ENCODE measurements at regions of chr9 and their contacts with region 1.

Region 1: GRCh38 chr9:129884220-129885017 is 49.2 kb downstream of the USP20 start:
- DNase-seq: peak; percentile 88 to 94
- H3K4me3 ChIP-seq: peak overlapping the region; percentile 40 to 46
- H3K27ac ChIP-seq: peak overlapping the region; percentile 73 to 85
- H3K4me1 ChIP-seq: peaks cover 0 to 33% (median 32%) of the 10 kb centered on the region in 4 donors
- H3K27me3 ChIP-seq: no peaks in the 10 kb centered on the region
- CTCF ChIP-seq: no peak

Region 2: GRCh38 chr9:129835021-129835871 is 49.2 kb before region 1 on chr9 and contains the starts of genes C9orf78 and USP20:
- intact Hi-C with region 1: loop called (anchors 5 kb)
- DNase-seq: peak; percentile 96 to 97
- H3K4me3 ChIP-seq: peak within 1 kb of the TSS; percentile 90 to 97
- H3K27ac ChIP-seq: peak within 1 kb of the TSS; percentile 91 to 96
- H3K4me1 ChIP-seq: peaks cover 0 to 55% (median 40%) of the 10 kb centered on the region in 4 donors
- H3K27me3 ChIP-seq: no peaks in the 10 kb centered on the region
- CTCF ChIP-seq: no peak

Region 3: GRCh38 chr9:129944506-129945116 is 60.2 kb after region 1 on chr9:
- intact Hi-C with region 1: loop called (anchors 10 kb)
- DNase-seq: no peak
- H3K4me3 ChIP-seq: no peak overlapping the region
- H3K27ac ChIP-seq: peak overlapping the region; percentile 41 to 66
- H3K4me1 ChIP-seq: peaks cover 0 to 51% (median 14%) of the 10 kb centered on the region in 4 donors
- H3K27me3 ChIP-seq: no peaks in the 10 kb centered on the region
- CTCF ChIP-seq: no peak

Region 4: DNA sequence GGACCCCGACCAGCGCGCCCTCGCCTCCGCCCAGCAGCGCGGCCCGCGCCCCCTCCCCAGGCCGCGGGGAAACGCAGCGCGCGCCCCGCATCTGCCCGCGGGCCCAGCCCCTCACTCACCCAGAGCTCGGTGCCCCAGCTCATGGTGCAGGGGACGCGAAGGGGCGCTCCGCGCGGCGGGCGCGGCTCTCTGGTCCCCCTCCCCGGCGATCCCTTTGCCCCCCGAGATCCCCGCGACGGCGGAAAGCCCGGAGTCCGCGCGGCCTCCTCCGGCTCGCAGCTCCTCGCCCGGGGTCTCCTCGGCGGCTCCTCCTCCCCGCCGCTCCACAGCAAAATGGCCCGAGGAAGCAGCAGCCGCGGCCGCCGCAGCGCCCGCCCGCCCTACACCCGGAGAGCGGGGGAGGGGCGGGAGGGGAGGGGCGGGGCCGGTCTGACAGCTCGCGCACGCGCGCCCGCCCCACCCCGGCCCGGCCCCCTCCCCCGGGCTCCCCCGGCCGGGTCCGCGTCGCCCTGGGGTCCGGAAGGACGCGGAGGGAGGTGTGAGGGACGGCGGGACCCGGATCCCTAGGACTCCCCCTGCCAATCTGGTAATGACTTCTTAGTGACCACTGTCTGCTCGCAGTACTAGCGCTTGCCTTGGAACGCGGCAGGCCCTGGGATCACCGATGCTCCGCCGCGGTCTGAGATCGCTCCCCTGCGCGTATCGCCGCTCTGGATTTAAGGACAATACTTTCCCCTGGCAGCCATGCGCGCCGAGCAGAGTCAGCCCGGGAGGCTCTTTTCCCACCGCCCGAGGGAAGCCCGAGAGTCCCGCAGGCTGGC is 158.6 kb after region 1 on chr9 and contains the start of gene FNBP1:
- intact Hi-C with region 1: loop called (anchors 2 kb)
- DNase-seq: peak; percentile 77 to 89
- H3K4me3 ChIP-seq: peak within 1 kb of the TSS; percentile 72 to 98
- H3K27ac ChIP-seq: peak within 1 kb of the TSS; percentile 83 to 96
- H3K4me1 ChIP-seq: peaks cover 0 to 43% (median 29%) of the 10 kb centered on the region in 4 donors
- H3K27me3 ChIP-seq: no peaks in the 10 kb centered on the region
- CTCF ChIP-seq: no peak

Region 5: GRCh38 chr9:130058154-130058553 is 173.7 kb after region 1 on chr9:
- intact Hi-C with region 1: loop called (anchors 5 kb)
- DNase-seq: no peak
- H3K4me3 ChIP-seq: no peak overlapping the region
- H3K27ac ChIP-seq: no peak overlapping the region
- H3K4me1 ChIP-seq: peaks cover 0 to 26% (median 12%) of the 10 kb centered on the region in 4 donors
- H3K27me3 ChIP-seq: no peaks in the 10 kb centered on the region
- CTCF ChIP-seq: no peak